ENCODE measurements at regions of chr17 and their contacts with region 1.

Region 1: DNA sequence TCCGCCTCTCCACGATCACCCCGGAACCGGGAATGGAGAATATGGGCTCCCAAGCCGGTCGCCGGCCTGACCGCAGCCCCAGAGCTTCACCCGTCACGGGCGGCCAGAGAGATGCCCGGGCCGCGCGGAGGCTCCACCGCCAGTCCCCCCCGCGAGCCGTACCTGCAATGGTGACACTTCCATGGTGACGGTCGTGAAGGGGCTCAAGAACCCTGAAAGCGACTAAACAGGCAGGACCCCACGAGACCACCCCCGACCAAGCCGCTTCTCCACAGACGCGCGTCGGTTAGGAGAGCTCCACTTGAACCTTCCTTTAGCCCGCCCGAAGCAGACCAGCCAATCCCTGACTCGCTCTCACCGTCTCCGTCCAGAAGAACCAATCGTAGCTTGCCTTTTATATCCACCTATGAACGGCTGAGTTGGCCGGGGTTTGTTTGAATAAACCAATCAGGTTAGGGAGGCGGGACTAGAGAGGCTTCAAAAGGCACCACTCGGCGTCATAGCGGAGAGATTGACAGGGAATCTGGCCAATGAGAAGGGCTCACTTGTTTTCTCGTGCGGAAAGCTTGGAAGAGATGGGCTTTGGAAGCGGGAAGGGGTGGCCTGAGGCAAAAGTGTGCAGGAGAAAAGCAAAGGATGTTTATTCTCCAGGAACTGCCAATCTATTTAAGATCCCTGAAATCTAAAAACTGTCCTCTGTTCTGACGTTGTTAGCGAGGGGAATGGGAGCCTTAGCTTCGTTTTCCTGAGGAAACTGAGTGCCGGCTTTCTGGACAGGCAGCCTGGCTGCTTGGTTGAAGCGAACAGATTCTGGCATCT is at the start of gene TOP2A:
- DNase-seq: peak; percentile 99
- H3K4me3 Mint-ChIP-seq: peak within 1 kb of the TSS; percentile 98
- H3K27ac Mint-ChIP-seq: peak within 1 kb of the TSS; percentile 90
- H3K4me1 Mint-ChIP-seq: peaks cover 26% of the 10 kb centered on the region
- H3K27me3 Mint-ChIP-seq: peaks cover 2% of the 10 kb centered on the region
- total RNA-seq, gene TOP2A: 410 to 416 TPM

Region 2: DNA sequence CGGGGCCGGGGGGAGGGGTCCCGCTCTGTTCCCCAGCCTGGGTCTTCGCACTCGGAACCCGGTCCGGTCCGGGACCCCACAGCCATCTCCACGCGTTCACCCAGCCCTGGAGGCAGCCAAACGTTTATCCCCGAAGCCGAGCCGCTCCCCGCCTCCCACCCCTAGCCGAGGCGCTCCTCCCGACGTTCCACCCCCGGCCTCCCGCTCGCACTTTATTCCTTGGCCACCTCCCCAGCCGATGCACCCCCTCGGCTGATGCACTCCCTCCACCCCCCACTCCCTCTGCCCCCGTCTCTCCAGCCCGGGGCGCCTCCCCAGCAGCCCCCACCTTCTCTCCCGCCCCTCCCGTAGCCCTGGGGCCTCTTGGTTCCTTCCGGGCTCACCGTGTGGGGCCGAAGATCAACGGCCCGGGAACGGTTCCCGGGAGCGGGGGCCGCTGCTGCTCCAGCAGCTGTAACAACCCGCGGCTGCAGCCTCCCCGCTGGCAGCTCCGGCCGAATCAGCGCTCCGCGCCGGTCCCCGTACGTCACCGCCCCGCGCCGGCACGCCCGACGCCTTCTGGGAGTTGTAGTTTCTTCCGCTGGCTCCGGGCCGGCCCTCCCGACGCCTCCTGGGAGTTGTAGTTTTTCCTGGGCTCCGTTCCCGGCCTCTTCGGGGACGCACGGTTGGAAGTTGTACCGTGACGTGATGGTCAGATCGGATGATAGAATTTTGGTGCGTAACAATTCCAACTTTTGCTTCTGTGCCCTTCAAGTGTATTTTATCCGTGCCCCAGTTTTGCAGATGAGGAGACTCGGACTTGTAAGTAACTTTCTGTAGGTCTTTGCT is 490.5 kb before region 1 on chr17 and contains the starts of genes LRRC3C and ORMDL3:
- CTCF ChIA-PET with region 1: no interaction called
- intact Hi-C with region 1: no loop called
- DNase-seq: peak; percentile 94
- H3K4me3 Mint-ChIP-seq: peak within 1 kb of the TSS; percentile 98
- H3K27ac Mint-ChIP-seq: peak within 1 kb of the TSS; percentile 94
- H3K4me1 Mint-ChIP-seq: peaks cover 56% of the 10 kb centered on the region
- H3K27me3 Mint-ChIP-seq: no peaks in the 10 kb centered on the region
- total RNA-seq, gene LRRC3C: not detected
- total RNA-seq, gene ORMDL3: 51.8 to 52.1 TPM

Region 3: GRCh38 chr17:40331743-40332641 is 85.8 kb before region 1 on chr17:
- CTCF ChIA-PET with region 1: no interaction called
- intact Hi-C with region 1: no loop called
- DNase-seq: peak; percentile 39
- H3K4me3 Mint-ChIP-seq: no peak overlapping the region
- H3K27ac Mint-ChIP-seq: peak overlapping the region; percentile 84
- H3K4me1 Mint-ChIP-seq: peaks cover 71% of the 10 kb centered on the region
- H3K27me3 Mint-ChIP-seq: no peaks in the 10 kb centered on the region

Region 4: DNA sequence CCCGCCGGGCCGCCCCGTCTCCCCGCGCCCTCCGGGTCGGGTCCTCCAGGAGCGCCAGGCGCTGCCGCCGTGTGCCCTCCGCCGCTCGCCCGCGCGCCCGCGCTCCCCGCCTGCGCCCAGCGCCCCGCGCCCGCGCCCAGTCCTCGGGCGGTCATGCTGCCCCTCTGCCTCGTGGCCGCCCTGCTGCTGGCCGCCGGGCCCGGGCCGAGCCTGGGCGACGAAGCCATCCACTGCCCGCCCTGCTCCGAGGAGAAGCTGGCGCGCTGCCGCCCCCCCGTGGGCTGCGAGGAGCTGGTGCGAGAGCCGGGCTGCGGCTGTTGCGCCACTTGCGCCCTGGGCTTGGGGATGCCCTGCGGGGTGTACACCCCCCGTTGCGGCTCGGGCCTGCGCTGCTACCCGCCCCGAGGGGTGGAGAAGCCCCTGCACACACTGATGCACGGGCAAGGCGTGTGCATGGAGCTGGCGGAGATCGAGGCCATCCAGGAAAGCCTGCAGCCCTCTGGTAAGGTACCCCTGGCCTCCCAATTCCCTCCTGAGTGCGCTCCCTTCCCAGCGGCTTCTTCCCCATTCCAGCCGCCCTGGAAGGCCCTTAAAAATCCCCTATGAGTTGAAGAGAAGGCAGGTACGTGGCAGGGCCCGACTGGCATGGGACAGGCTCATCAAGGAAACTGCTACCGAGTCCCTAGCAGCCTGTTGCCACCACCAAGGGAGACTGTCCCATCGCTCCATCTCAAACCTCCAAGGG is 25.9 kb after region 1 on chr17:
- CTCF ChIA-PET with region 1: interaction called, 3 read pairs
- intact Hi-C with region 1: loop called (anchors 1 kb)
- DNase-seq: peak; percentile 74
- H3K4me3 Mint-ChIP-seq: peak overlapping the region; percentile 78
- H3K27ac Mint-ChIP-seq: peak overlapping the region; percentile 76
- H3K4me1 Mint-ChIP-seq: peaks cover 29% of the 10 kb centered on the region
- H3K27me3 Mint-ChIP-seq: peaks cover 4% of the 10 kb centered on the region